Heart left ventricle (tissue), 16 donors: ENCODE measurements at regions of chr9 and their contacts with region 1.

Region 1: GRCh38 chr9:109918339-109919163 is 138.6 kb downstream of the PALM2AKAP2 start:
- DNase-seq: no peak
- ATAC-seq: peak in 3 of 4 donors; percentile 43 to 53 (median 52)
- H3K4me3 ChIP-seq: peak overlapping the region in 1 of 12 donors; percentile 12
- H3K27ac ChIP-seq: peak overlapping the region in 9 of 12 donors; percentile 0 to 56 (median 22)
- H3K4me1 ChIP-seq: peaks cover 0 to 61% (median 35%) of the 10 kb centered on the region in 12 donors
- H3K27me3 ChIP-seq: no peaks in the 10 kb centered on the region
- CTCF ChIP-seq: no peak
- POLR2A ChIP-seq: no peak

Region 2: GRCh38 chr9:109963079-109963478 is 44.5 kb after region 1 on chr9:
- intact Hi-C with region 1: loop called in 3 of 10 experiments (anchors 5 kb)
- DNase-seq: no peak
- ATAC-seq: no peak
- H3K4me3 ChIP-seq: no peak overlapping the region
- H3K27ac ChIP-seq: no peak overlapping the region
- H3K4me1 ChIP-seq: peaks cover 2 to 42% (median 18%) of the 10 kb centered on the region in 12 donors
- H3K27me3 ChIP-seq: no peaks in the 10 kb centered on the region
- CTCF ChIP-seq: no peak
- POLR2A ChIP-seq: no peak

Region 3: DNA sequence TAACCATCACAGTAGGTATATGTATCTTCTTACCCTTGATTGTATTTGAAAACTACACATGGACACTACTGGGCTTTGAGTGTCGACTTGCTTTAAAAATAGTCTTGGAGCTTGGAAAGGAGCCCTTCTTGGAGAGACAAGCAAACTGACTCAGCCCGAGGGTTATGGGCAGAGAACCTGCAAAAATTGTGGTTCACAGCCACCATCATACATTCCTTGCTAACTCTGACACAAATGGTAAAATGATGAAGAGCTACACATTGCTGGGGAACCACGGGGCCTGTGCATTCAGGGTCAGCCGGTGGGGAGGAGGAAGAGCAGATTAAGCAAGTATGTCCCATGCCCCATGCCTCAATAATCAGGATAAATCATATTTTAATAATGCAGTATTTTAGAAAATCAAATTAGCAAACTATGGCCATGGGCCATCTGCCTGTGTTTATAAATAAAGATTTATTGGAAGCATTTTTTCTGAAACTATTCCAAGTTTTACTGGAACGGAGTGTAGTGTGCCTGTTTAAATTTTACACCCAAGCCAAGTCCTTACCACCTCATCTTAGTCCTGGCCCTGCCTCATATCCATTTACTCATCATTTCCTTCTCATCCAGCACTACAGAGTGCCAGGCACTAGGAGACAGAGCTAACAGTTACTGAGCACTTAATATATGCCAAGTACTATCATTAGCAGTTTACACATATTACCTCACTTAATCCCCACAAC is 57.2 kb after region 1 on chr9:
- intact Hi-C with region 1: no loop called
- DNase-seq: no peak
- ATAC-seq: no peak
- H3K4me3 ChIP-seq: no peak overlapping the region
- H3K27ac ChIP-seq: no peak overlapping the region
- H3K4me1 ChIP-seq: peaks cover 0 to 42% (median 14%) of the 10 kb centered on the region in 12 donors
- H3K27me3 ChIP-seq: no peaks in the 10 kb centered on the region
- CTCF ChIP-seq: no peak
- POLR2A ChIP-seq: no peak

Region 4: DNA sequence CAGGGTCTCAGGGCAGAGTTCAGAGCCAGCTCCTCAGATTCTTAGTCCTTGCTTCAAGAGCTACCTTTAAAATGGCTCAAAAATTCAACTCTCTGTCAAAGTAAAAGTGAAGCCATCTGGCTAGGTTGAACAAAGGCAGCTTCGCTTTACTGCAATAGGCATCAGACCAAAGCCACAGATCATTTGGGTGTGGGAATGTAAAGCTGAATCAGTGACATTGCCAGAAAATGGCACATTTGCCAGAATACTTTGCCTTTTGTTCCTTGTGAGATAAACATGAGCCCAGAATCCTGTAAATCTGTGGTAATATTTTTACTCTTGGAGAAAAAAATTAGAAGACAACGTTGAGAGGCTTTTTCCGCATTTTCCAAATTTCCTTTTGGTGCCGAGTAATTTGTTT is 72.0 kb after region 1 on chr9:
- intact Hi-C with region 1: loop called in 1 of 10 experiments (anchors 5 kb)
- DNase-seq: no peak
- ATAC-seq: no peak
- H3K4me3 ChIP-seq: no peak overlapping the region
- H3K27ac ChIP-seq: no peak overlapping the region
- H3K4me1 ChIP-seq: peaks cover 0 to 32% (median 9%) of the 10 kb centered on the region in 12 donors
- H3K27me3 ChIP-seq: no peaks in the 10 kb centered on the region
- CTCF ChIP-seq: no peak
- POLR2A ChIP-seq: no peak

Region 5: DNA sequence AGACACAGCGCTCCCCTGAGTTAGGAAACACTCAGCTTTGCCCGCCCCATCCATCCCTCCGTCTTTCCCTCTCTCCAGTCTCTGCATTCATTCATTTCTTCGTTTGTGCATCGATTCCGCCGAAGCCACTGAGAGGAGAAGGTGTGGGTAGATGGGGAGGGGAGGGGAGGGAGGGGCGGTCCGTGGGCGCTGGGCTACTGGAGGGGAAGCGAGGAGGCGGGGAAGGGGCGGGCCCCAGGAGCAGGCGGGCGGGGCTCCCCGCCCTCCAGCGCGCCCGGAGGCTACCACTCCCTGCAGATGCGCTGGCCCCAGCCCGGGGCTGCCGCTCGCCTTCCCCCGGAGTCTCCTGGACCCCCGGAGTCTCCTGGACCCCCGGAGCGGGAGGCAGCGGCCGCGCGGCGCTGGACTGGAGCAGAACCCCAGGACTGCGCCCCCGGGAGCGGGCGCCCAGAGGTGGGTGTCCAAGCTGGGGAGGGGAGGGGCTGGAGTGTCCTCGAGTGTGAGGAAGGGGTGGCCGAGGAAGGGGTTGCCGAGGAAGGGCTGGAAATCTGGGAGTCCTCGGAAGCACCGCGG is 129.9 kb after region 1 on chr9:
- intact Hi-C with region 1: loop called in 2 of 10 experiments (anchors 5 kb)
- DNase-seq: peak; percentile 85 to 90 (median 90)
- ATAC-seq: peak; percentile 88 to 96 (median 95)
- H3K4me3 ChIP-seq: peak overlapping the region; percentile 72 to 91 (median 86)
- H3K27ac ChIP-seq: peak overlapping the region; percentile 35 to 91 (median 83)
- H3K4me1 ChIP-seq: peaks cover 3 to 54% (median 30%) of the 10 kb centered on the region in 12 donors
- H3K27me3 ChIP-seq: no peaks in the 10 kb centered on the region
- CTCF ChIP-seq: no peak
- POLR2A ChIP-seq: peak; percentile 68 to 90